ENCODE measurements at regions of chr11 and their contacts with region 1.

Region 1: DNA sequence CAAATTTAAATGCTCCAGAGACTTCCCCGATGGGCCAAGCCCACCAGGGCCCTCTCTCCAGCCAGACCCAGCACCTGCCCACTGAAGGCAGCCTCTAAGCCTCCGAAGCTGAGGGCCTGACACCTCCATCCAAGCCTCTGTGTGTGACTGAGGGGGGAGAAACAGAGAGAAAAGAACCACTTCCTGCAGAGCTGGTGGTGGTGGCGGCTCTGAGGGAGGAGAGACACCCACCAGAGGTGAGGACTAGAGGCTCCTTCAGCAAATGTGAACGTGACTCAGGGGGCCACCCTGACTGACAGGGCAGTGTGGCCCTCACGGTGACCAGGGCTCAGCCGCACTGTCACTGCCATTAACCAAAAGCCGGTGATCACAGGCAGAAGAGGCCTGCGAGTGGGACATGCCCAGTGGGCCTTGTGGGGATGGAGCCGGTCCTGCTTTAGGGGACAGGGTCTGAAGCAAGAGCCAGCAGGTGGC is 31.0 kb upstream of the CD5 start:
- DNase-seq: peak; percentile 78
- ATAC-seq: peak; percentile 97
- H3K4me3 Mint-ChIP-seq: peak overlapping the region; percentile 78
- H3K27ac Mint-ChIP-seq: peak overlapping the region; percentile 94
- H3K4me1 Mint-ChIP-seq: peaks cover 71% of the 10 kb centered on the region
- H3K27me3 Mint-ChIP-seq: no peaks in the 10 kb centered on the region

Region 2: DNA sequence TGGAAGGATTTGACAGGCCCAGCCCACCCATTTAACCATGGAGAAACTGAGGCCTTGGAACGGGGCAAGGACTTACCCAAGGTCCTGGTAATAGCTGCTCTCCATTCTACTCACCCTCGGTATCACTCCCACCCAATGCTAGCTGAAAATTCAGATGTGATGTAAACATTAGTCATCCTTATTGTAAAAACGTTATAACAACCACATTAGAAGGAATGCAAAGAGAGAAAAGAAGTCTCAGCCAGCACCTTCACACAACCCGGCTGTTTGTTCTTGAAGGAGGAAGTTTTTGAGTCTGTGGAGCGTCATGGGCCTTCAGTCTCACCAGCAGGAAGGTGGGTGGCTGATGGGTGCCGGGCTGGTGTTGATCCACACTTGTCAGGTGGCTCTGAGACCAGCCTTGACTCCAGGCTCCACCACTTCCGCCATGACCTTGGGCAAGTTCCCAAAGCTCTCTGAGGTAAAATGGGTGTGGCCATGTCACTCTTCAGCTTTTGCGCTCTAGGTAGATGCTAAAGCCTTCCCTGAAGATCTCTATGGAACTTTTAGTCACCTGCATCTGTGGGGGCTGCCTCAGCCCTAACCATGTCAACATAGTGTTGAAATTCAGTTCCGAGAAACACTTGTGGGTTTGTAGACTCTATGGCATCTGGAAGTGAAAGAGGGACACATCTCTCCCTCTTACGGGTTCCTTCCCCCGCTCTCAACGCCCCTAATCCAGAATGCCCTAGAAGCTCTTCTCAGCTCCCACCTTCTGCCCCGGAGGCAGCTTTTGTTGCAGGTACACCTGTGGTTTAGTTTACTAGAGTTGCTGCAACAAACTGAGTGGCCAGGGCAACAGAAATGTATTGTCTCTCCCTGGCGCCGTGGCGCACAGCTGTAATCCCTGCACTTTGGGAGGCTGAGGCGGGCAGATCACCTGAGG is 85.0 kb before region 1 on chr11:
- POLR2A ChIA-PET with region 1: interaction called, 10 read pairs
- DNase-seq: peak; percentile 77
- ATAC-seq: peak; percentile 85
- H3K4me3 Mint-ChIP-seq: peak overlapping the region; percentile 83
- H3K27ac Mint-ChIP-seq: peak overlapping the region; percentile 97
- H3K4me1 Mint-ChIP-seq: peaks cover 82% of the 10 kb centered on the region
- H3K27me3 Mint-ChIP-seq: no peaks in the 10 kb centered on the region

Region 3: GRCh38 chr11:61028272-61028761 is 42.9 kb before region 1 on chr11:
- POLR2A ChIA-PET with region 1: interaction called, 22 read pairs
- DNase-seq: peak; percentile 46
- ATAC-seq: peak; percentile 27
- H3K4me3 Mint-ChIP-seq: peak overlapping the region; percentile 84
- H3K27ac Mint-ChIP-seq: peak overlapping the region; percentile 95
- H3K4me1 Mint-ChIP-seq: peaks cover 66% of the 10 kb centered on the region
- H3K27me3 Mint-ChIP-seq: no peaks in the 10 kb centered on the region

Region 4: DNA sequence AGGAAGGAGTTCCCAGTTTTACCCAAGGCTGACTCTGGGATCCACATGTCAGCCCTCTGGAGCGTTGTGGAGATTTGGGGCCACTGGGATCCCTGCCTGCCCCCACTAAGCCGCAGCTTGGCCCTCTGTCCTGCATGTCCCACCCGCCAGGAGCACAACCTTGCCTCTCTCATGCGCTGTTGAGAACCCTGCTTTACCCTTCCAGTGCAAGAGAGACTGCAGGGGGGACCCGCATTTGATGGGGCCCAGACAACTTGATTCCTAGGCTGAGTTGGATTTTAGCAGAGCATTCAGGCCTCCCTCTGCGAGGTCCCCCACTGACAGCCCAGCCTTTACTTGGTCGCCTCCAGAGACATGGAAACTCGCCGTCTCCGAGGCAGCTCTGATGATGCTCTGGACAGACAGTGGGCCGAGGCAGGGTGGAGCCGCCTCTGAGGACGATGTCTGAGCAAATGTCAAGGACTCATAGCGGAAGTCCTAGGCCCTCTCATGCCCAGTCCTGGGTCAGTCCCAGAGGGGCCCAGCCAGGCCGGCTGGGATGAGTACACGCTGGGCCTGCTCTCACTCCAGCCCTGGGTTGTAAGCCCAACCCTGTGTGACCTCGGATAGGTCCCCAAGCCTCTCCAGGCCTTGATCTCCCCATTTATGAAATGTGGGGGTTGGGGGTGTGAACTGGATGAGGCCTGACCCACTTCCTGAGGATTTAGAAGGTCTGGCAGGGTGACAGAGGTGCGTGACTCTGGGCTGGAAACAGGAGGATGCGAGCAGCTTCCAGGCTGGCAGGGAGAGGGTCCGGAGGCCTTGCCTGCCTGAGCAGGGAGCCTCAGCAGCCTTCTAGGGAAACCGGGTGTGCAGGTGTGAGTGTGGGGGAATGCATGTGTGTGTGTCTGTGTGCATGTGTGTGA is 31.7 kb after region 1 on chr11:
- POLR2A ChIA-PET with region 1: interaction called, 16 read pairs
- DNase-seq: no peak
- ATAC-seq: peak; percentile 27
- H3K4me3 Mint-ChIP-seq: no peak overlapping the region
- H3K27ac Mint-ChIP-seq: no peak overlapping the region
- H3K4me1 Mint-ChIP-seq: peaks cover 37% of the 10 kb centered on the region
- H3K27me3 Mint-ChIP-seq: no peaks in the 10 kb centered on the region

Region 5: DNA sequence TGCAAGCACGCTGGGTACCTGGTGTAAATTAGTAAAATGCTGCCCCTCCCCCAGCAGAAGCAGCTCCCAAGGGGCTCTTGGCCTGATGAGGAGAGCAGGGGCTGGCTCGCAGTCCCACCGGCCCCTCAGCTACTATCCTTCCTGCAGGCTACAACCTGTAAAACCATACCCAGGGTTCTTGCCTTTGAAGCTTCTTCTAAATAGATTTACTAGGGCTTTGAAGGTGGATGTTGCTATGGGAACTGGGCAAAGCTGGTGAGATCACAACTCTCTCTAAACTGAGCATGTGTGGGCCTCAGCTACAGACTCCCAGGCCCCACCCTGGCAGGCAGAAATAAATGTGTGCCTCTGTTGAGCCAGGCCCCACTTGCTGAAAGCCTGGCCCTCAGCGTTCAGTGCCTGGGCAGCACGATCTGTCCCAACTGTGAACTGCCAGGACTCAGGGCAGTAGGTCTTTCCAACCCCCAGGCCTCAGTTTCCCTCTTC is 49.5 kb after region 1 on chr11:
- POLR2A ChIA-PET with region 1: no interaction called
- DNase-seq: no peak
- ATAC-seq: peak; percentile 81
- H3K4me3 Mint-ChIP-seq: peak overlapping the region; percentile 69
- H3K27ac Mint-ChIP-seq: peak overlapping the region; percentile 85
- H3K4me1 Mint-ChIP-seq: peaks cover 64% of the 10 kb centered on the region
- H3K27me3 Mint-ChIP-seq: no peaks in the 10 kb centered on the region